ENCODE measurements at regions of chr7 and their contacts with region 1.

Region 1: DNA sequence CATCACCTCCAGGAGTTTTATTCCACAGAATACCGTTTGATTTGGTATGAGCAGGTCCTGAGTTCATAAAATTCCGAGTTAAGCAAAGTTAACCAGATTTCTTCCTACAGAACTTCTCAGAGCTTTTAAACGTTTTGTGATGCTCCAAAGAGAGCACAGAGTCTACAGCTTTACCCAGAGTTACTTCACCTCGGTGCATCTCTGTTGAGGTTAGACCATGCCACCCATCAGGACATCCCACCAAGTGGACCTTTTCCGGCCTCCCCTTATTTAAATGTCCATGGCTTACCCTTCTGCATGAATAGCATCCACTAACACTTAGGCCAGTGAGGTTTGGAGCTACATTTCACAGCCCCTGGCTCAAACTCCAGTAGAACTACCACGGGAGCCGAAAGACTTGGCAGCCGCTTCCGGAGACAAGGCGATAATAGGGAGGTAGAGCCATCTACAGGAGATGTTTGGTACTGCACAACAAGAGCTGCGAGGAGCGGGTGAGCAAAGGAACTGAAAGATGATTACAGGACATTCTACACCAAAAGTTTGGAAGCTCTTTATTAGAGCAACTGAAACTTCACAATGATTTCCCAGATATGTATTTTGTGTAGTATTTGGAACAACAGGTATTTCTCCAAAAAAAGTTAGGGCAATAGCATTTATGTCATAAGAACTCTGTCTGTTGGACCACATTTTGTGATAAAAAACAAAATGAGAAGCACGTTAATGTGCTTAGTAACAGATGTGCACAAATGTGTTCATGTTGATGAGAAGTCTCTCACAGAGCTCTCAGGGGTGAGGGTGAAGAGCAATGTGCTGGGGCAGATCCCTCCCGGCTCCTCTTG is 174.7 kb downstream of the HERPUD2 start:
- H3K4me3 ChIP-seq: no peak overlapping the region
- H3K27ac ChIP-seq: no peak overlapping the region
- H3K4me1 ChIP-seq: no peaks in the 10 kb centered on the region
- CTCF ChIP-seq: peak; percentile 56; the same call in 1 of the 2 replicates

Region 2: DNA sequence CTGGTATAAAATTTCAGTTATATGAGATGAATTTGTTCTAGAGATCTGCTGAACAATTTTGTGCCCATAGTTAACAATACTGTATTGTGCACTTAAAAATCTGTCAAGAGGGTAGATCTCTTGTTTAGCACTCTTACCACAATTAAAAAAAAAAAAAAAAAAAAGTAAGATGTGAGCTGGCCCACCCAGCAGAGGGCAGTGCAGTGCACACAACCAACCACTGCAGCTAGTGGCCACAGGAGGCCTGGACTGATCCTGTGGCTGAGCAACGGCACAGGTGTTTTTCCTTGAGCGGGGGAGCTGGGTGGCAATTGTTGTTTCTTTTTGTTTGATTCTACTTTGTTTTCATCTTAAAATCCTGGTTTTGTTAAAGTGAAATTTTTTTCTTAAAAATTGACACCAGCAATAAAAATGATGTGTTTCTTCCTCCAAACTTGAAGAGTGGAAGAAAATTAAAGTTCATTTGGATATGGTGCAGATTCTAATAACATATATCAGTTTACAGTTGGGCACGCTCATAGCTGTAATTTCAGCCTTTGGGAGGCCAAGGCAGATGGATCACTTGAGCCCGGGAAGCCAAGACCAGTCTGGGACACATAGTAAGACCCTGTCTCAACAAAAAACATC is 95.2 kb before region 1 on chr7:
- CTCF ChIA-PET with region 1: interaction called, 59 read pairs
- POLR2A ChIA-PET with region 1: no interaction called
- H3K4me3 ChIP-seq: no peak overlapping the region
- H3K27ac ChIP-seq: no peak overlapping the region
- H3K4me1 ChIP-seq: no peaks in the 10 kb centered on the region
- CTCF ChIP-seq: peak; percentile 44

Region 3: DNA sequence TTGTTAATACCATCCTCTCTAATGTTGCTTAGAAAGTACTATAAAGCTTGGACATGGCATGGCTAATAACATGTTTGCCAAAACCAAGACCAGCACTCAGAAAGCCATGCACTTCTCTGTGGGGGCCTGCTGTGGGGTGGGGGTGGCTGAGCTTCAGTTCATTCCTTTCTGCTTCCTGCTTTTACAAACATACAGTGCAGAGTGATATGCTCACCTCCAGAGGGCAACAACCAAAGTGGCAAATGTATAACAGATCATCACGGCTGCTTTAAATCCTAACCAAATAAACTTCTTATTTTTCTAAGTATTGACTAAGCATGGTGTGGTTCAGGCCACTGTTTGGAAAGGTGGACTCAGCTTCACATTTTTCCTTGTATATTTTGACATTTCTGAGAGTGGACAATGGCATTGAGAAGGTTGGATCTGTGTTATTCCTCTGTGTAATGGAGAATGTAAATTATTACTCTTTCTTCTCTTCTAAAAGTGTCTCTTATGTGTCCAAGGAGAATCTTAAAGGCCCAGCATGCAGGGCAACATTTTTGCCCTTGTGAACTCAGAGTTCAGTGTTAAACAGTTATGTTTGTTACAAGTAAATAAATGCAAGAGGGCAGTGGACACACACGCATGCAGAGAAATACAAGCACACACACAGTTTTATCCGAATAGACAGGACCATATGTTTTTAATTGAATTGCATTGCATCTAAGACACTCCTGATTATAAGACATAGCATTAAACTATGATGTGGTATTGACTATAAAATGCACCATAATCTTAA is 11.4 kb before region 1 on chr7:
- CTCF ChIA-PET with region 1: interaction called, 22 read pairs
- POLR2A ChIA-PET with region 1: no interaction called
- H3K4me3 ChIP-seq: no peak overlapping the region
- H3K27ac ChIP-seq: no peak overlapping the region
- H3K4me1 ChIP-seq: no peaks in the 10 kb centered on the region
- CTCF ChIP-seq: no peak

Region 4: GRCh38 chr7:35530124-35531109 is 10.2 kb after region 1 on chr7:
- CTCF ChIA-PET with region 1: interaction called, 22 read pairs
- POLR2A ChIA-PET with region 1: no interaction called
- H3K4me3 ChIP-seq: no peak overlapping the region
- H3K27ac ChIP-seq: no peak overlapping the region
- H3K4me1 ChIP-seq: no peaks in the 10 kb centered on the region
- CTCF ChIP-seq: no peak

Region 5: DNA sequence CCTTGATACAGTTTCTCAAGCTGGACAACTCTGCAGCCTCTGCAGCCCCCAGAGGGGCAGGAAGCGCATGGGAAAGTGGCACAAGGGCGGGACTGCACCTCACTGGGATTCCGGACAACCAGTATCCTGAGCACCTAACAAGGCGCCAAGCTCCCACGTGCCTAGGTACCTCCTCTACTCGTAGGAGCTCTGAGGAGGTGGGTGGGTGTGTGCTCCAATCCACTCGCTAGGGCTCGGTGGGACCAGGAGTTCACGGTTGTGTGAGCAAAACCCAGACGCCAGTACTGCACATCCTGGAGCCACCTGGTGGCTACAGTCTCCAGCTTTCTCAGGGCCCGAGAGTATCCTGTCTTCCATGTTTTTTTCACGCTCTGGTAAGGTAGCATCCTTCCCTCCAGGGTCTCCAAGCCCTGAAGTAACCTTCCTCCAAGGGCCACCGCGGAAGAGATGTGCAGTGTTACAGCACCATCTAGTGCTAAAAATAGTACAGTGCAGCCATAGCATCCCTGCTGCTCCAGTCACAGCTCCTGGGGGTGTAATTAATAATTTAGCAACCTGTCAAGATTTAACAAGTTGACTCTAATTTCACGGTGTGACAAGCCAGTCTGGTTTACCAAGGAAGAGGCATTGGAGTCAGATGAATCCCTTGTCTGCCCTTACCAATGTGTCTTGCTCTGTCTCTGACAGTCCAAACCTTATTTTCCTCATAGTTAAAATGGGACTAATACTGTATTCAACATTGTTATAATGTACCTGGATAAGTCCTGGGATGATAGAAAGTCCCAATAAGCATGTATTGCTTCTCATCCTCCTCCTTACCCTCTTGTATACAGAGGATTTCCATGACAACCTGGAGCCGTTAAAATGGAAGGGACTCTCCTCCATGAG is 104.4 kb after region 1 on chr7:
- CTCF ChIA-PET with region 1: interaction called, 14 read pairs
- POLR2A ChIA-PET with region 1: no interaction called
- H3K4me3 ChIP-seq: no peak overlapping the region
- H3K27ac ChIP-seq: no peak overlapping the region
- H3K4me1 ChIP-seq: 0 out of 2 replicates have a peak, but pooled peaks cover 7% of the 10 kb centered on the region
- CTCF ChIP-seq: peak; percentile 59

Region 6: GRCh38 chr7:35652124-35652523 is 131.9 kb after region 1 on chr7:
- CTCF ChIA-PET with region 1: no interaction called
- POLR2A ChIA-PET with region 1: no interaction called
- H3K4me3 ChIP-seq: no peak overlapping the region
- H3K27ac ChIP-seq: no peak overlapping the region
- H3K4me1 ChIP-seq: peaks cover 4% of the 10 kb centered on the region; the same call in 1 of the 2 replicates
- CTCF ChIP-seq: no peak